K562 (cell line): ENCODE measurements at regions of chr20 and their contacts with region 1.

Region 1: DNA sequence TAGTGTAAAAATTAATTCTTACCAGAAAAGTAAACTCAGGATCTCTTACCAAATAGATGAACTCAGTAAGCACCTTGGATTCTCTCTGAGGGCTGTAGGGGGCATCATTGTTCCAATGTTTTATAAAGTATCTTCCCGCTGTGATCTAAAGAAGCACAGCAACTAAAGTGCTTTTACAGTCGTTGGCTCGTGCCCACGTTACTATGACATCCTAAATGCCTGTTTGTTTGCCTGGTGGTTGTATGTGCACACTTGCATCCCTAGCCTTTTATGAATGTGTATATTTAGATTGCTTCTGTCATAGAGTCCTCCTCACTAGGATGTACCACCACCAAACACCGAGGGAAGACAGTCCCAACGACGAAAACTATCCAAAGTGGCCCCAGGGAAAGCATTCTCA is 34.5 kb downstream of the SLX4IP start:
- DNase-seq: peak in 3 of 4 experiments; percentile 10 to 64 (median 38)
- ATAC-seq: peak; percentile 85
- H3K4me3 ChIP-seq: no peak overlapping the region
- H3K27ac ChIP-seq: no peak overlapping the region
- H3K4me1 ChIP-seq: peaks cover 0 to 6% of the 10 kb centered on the region in 2 experiments; a peak in 1 of 5 replicates
- H3K27me3 ChIP-seq: no peaks in the 10 kb centered on the region
- CTCF ChIP-seq: peak; percentile 19 to 57 (median 41); a peak in 3 of 6 replicates
- EP300 ChIP-seq: no peak
- POLR2A ChIP-seq: no peak
- RAD21 ChIP-seq: peak; percentile 63 to 69

Region 2: GRCh38 chr20:10536531-10536930 is 66.9 kb after region 1 on chr20:
- CTCF ChIA-PET with region 1: interaction called, 4 read pairs
- POLR2A ChIA-PET with region 1: no interaction called
- in situ Hi-C with region 1: no loop called
- intact Hi-C with region 1: loop called (anchors 5 kb)
- DNase-seq: no peak
- ATAC-seq: no peak
- H3K4me3 ChIP-seq: no peak overlapping the region
- H3K27ac ChIP-seq: no peak overlapping the region
- H3K4me1 ChIP-seq: no peaks in the 10 kb centered on the region; a peak in 1 of 5 replicates
- H3K27me3 ChIP-seq: no peaks in the 10 kb centered on the region
- CTCF ChIP-seq: peak; percentile 19 to 46 (median 26); a peak in 4 of 6 replicates
- EP300 ChIP-seq: no peak
- POLR2A ChIP-seq: no peak
- RAD21 ChIP-seq: peak; percentile 28 to 50; a peak in 3 of 4 replicates